Calu3 (cell line): ENCODE measurements at regions of chr1 and their contacts with region 1.

Region 1: GRCh38 chr1:55107101-55107500 is 67.8 kb downstream of the PCSK9 start:
- DNase-seq: no peak
- H3K4me3 Mint-ChIP-seq: no peak overlapping the region
- H3K27ac Mint-ChIP-seq: no peak overlapping the region
- H3K4me1 Mint-ChIP-seq: peaks cover 10% of the 10 kb centered on the region
- H3K27me3 Mint-ChIP-seq: no peaks in the 10 kb centered on the region
- CTCF ChIP-seq: no peak

Region 2: DNA sequence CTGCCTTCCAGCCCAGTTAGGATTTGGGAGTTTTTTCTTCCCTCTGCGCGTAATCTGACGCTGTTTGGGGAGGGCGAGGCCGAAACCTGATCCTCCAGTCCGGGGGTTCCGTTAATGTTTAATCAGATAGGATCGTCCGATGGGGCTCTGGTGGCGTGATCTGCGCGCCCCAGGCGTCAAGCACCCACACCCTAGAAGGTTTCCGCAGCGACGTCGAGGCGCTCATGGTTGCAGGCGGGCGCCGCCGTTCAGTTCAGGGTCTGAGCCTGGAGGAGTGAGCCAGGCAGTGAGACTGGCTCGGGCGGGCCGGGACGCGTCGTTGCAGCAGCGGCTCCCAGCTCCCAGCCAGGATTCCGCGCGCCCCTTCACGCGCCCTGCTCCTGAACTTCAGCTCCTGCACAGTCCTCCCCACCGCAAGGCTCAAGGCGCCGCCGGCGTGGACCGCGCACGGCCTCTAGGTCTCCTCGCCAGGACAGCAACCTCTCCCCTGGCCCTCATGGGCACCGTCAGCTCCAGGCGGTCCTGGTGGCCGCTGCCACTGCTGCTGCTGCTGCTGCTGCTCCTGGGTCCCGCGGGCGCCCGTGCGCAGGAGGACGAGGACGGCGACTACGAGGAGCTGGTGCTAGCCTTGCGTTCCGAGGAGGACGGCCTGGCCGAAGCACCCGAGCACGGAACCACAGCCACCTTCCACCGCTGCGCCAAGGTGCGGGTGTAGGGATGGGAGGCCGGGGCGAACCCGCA is 67.6 kb before region 1 on chr1 and contains the start of gene PCSK9:
- CTCF ChIA-PET with region 1: no interaction called
- intact Hi-C with region 1: loop called (anchors 10 kb)
- DNase-seq: peak; percentile 77
- H3K4me3 Mint-ChIP-seq: peak within 1 kb of the TSS; percentile 99
- H3K27ac Mint-ChIP-seq: peak within 1 kb of the TSS; percentile 68
- H3K4me1 Mint-ChIP-seq: peaks cover 52% of the 10 kb centered on the region
- H3K27me3 Mint-ChIP-seq: no peaks in the 10 kb centered on the region
- CTCF ChIP-seq: no peak
- total RNA-seq, gene PCSK9: 31.8 and 41.6 TPM in 2 replicates